PC-9 (cell line): ENCODE measurements at regions of chr7 and their contacts with region 1.

Region 1: GRCh38 chr7:18570890-18571478 is 75.4 kb downstream of the HDAC9 start:
- DNase-seq: peak in 1 of 2 experiments; percentile 63
- H3K4me3 ChIP-seq: no peak overlapping the region
- H3K27ac ChIP-seq: no peak overlapping the region
- H3K4me1 ChIP-seq: no peaks in the 10 kb centered on the region
- H3K27me3 ChIP-seq: no peaks in the 10 kb centered on the region
- CTCF ChIP-seq: peak; percentile 78

Region 2: DNA sequence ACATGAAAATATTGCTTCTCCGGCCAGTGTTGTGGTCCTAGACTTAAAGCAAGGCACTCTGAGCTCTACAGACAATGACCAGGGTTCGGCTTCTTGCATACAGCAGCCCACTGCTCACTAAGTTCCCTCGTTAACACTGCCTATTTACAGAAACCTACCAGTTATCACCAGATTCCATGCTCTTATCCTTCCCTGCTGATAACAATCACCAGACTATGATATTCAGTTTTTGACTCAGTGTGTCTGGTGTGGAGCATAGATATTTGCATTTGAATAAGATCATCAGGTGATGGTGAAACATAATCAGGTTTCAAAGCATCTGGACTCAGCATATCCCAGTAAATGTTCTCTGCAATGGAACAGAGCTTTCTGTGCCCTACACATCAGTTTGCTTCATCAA is 813.0 kb before region 1 on chr7:
- CTCF ChIA-PET with region 1: no interaction called
- POLR2A ChIA-PET with region 1: no interaction called
- intact Hi-C with region 1: no loop called
- DNase-seq: no peak
- H3K4me3 ChIP-seq: no peak overlapping the region
- H3K27ac ChIP-seq: no peak overlapping the region
- H3K4me1 ChIP-seq: no peaks in the 10 kb centered on the region
- H3K27me3 ChIP-seq: no peaks in the 10 kb centered on the region
- CTCF ChIP-seq: no peak

Region 3: DNA sequence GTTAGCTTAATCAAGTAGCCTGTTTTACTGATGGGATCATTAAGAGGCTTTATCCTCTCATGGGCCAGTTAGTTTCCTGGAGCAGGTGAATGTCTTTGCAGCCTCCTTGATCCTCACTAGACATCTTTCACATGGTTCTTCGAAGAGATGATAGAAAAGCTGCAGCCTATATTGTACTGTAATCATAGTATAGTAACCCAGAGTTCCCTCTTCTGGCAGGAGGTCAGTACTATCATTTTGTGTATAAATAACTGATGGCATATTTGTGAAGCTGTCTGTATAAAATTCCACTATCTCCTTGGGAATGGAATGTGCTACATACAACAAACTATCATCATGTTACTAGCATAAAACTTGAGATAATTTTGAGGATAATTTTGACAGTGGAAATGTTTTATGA is 419.6 kb before region 1 on chr7:
- CTCF ChIA-PET with region 1: no interaction called
- POLR2A ChIA-PET with region 1: no interaction called
- intact Hi-C with region 1: no loop called
- DNase-seq: no peak
- H3K4me3 ChIP-seq: no peak overlapping the region
- H3K27ac ChIP-seq: no peak overlapping the region
- H3K4me1 ChIP-seq: no peaks in the 10 kb centered on the region
- H3K27me3 ChIP-seq: no peaks in the 10 kb centered on the region
- CTCF ChIP-seq: peak; percentile 35; the same call in 1 of the 2 replicates

Region 4: DNA sequence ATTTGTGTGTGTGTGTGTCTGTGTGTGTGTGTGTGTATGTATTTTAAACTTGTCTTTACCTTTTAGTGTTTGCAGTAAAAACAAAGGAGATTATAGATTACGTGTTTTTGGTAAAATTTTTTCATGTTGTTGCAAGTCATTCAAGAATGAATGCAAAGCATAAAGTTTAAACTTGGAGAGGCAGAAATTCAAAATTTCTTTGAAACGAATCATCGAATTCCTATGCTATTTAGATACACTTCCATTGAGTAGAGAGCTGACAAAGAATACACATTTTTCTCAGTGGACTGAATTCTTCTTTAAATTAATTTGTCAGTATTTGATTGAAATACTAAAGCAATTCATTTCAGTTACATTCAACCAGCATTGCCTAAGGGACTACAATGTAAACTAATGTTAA is 141.4 kb before region 1 on chr7:
- CTCF ChIA-PET with region 1: no interaction called
- POLR2A ChIA-PET with region 1: no interaction called
- intact Hi-C with region 1: loop called (anchors 2 kb)
- DNase-seq: peak in 1 of 2 experiments; percentile 56
- H3K4me3 ChIP-seq: no peak overlapping the region
- H3K27ac ChIP-seq: peak overlapping the region; percentile 13; the same call in 1 of the 2 replicates
- H3K4me1 ChIP-seq: peaks cover 27% of the 10 kb centered on the region
- H3K27me3 ChIP-seq: no peaks in the 10 kb centered on the region
- CTCF ChIP-seq: no peak

Region 5: DNA sequence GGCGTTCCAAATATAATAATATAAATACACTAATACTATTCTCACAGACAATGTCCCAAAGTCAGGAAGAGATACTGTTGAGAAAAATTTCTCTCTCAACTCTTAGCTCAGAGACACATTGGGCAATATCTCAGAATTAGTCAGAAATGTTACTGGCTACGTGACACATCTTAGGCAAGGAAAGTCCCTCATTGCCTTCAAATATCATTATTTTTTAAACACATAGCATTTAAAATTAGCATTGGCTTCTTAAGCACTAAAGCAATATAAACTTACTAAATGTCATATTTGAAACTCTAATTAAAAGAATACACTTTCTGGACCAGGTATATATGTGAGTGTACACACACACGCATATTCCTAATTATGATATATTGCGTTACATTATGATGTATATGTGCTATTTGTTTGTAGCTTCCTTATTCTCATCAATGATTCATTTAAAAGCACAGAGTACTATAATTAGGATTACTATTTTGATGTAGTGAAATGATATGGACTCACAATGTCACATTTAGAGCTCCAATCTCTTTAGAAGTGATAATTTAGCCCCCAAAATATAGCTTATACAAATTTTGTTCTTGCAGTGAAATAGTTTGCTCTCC is 290.6 kb after region 1 on chr7:
- CTCF ChIA-PET with region 1: no interaction called
- POLR2A ChIA-PET with region 1: no interaction called
- intact Hi-C with region 1: no loop called
- DNase-seq: no peak
- H3K4me3 ChIP-seq: no peak overlapping the region
- H3K27ac ChIP-seq: no peak overlapping the region
- H3K4me1 ChIP-seq: peaks cover 4% of the 10 kb centered on the region
- H3K27me3 ChIP-seq: no peaks in the 10 kb centered on the region
- CTCF ChIP-seq: no peak

Region 6: GRCh38 chr7:19275000-19275399 is 704.0 kb after region 1 on chr7:
- CTCF ChIA-PET with region 1: no interaction called
- POLR2A ChIA-PET with region 1: no interaction called
- intact Hi-C with region 1: no loop called
- DNase-seq: no peak
- H3K4me3 ChIP-seq: no peak overlapping the region
- H3K27ac ChIP-seq: no peak overlapping the region
- H3K4me1 ChIP-seq: no peaks in the 10 kb centered on the region
- H3K27me3 ChIP-seq: no peaks in the 10 kb centered on the region
- CTCF ChIP-seq: no peak